IMR-90 (cell line): ENCODE measurements at regions of chr11 and their contacts with region 1.

Region 1: DNA sequence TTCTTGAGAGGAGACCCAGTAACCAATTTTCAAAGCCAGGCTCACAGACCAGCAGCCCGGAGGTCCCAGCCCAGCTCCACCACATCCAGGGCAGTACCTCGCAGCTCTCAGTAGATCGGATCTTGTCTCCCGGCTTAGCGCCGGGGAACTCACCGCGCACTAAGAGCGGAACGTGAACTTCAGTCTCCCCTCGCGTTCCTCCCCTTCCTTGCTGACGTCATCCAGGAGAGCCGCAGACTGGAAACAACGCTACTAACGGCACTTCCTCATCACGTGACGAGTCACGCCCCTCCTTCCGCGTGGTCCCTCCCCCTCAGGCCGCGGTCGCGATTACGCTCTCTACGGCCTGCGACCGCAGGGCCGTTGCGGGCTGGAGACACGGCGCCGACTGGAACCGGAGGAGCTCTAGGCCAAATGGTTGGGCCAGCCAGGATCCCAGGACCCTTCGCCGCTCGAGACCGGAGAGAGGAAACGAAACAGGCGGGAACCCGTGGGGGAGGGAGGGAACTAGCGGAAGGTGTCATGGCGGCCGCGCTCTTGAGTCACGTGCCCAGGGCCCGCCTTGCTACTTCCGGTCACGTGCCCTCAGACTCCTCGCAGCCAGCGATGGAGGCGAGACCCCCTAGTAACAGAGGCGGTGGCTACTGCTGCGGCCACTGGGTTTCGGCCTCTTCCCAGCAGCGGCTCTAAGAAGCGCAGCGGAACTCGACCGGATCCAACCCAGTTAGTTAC is at the starts of genes GTF2H1 and HPS5:
- DNase-seq: peak; percentile 99
- ATAC-seq: peak; percentile 94
- H3K4me3 ChIP-seq: peak within 1 kb of the TSS; percentile 77
- H3K27ac ChIP-seq: peak within 1 kb of the TSS; percentile 98
- H3K4me1 ChIP-seq: peaks cover 4% of the 10 kb centered on the region
- H3K27me3 ChIP-seq: no peaks in the 10 kb centered on the region
- CTCF ChIP-seq: no peak
- POLR2A ChIP-seq: peak; percentile 97
- RAD21 ChIP-seq: no peak
- total RNA-seq, gene GTF2H1: 67.0 and 72.8 TPM in 2 replicates
- total RNA-seq, gene HPS5: 28.3 and 34.7 TPM in 2 replicates

Region 2: DNA sequence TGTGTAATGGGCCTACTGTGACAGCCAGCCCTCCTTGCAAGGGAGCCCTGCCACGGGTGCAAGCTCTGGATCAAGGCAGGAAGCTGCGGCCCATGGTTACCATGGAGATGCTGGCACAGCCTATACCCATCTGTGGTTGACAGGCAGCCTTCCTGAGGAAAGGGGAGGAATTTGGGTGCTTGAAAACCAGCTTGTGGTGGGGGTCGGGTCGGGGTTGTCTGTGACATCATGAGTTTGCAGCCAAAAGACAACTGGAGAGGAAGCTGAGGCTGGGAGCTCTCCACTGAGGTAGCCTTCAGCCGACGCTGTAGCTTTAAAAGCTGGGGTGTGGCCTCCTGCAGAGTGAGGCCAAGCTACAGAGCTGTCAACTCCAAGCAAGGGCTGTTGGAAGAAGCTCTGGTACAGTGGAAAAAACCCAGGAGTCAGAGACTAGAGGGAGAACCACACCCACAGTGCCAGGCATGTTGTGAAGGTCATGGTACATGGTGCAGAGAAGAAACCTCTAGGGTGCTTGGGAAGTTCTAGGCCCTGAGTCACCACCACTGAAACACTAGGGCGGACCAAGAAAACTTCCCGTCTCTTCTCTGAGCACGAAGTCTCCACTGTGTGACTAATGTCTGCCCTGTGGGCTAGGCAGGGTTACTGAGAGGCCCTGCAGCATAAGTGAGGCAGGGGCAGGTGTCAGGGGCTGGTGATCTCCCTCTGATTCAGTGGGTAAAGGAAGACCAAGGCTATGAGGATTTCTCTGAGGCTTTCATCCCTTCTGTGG is 61.4 kb after region 1 on chr11:
- CTCF ChIA-PET with region 1: no interaction called
- POLR2A ChIA-PET with region 1: interaction called, 13 read pairs
- dilution Hi-C with region 1: no loop called
- in situ Hi-C with region 1: no loop called
- intact Hi-C with region 1: no loop called
- DNase-seq: peak; percentile 96
- ATAC-seq: peak; percentile 93
- H3K4me3 ChIP-seq: no peak overlapping the region
- H3K27ac ChIP-seq: peak overlapping the region; percentile 88
- H3K4me1 ChIP-seq: peaks cover 19% of the 10 kb centered on the region
- H3K27me3 ChIP-seq: no peaks in the 10 kb centered on the region
- CTCF ChIP-seq: no peak
- POLR2A ChIP-seq: no peak; the same call in 1 of the 2 replicates
- RAD21 ChIP-seq: no peak

Region 3: DNA sequence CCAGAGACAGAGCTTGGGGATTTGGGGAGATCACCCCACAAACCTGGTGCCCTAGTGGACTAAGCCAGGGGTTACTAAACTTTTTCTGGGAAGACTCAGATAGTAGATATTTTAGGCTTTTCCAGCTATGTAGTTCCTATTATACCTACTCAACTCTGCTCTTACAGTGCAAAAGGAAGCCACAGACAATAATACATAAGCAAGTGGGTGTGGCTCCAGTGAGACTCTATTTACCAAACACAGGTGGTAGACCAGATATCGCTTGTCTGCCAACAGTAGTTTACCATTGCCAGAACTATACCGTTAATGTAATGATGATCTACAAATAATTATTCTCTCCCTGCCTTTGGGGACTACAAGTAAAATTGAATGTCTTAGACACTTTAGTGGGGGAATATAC is 96.9 kb after region 1 on chr11:
- CTCF ChIA-PET with region 1: no interaction called
- POLR2A ChIA-PET with region 1: no interaction called
- dilution Hi-C with region 1: no loop called
- in situ Hi-C with region 1: no loop called
- intact Hi-C with region 1: no loop called
- DNase-seq: no peak
- ATAC-seq: no peak
- H3K4me3 ChIP-seq: no peak overlapping the region
- H3K27ac ChIP-seq: no peak overlapping the region
- H3K4me1 ChIP-seq: no peaks in the 10 kb centered on the region
- H3K27me3 ChIP-seq: no peaks in the 10 kb centered on the region
- CTCF ChIP-seq: no peak
- POLR2A ChIP-seq: no peak
- RAD21 ChIP-seq: no peak